GM12878 (cell line): ENCODE measurements at regions of chr5 and their contacts with region 1.

Region 1: DNA sequence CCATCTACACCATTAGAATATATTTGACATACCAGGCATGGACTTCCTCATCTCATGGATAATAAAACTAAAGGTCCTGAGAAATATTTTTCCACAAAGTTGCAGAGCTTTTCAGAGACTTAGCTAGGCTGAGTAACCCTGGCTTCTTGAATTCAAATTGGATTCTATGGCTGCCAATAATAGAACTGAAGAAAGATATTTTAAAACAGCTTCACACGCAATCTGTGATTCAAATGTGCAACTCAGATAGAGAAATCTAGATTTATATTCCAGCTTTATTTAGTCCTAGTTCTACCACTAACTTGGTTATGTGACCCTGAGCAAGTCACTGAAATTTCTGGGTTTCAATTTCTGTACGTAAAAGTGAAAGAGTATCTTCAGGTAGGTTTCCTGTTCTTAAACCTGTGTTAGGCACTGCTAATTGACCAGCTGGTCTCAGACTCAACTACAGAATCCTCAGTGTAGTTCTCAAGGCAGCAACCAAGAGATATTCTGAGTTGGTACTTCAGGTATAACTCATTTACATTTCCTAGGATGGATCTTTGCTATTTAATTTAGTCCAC is 235.3 kb downstream of the GABRB2 start:
- DNase-seq: peak; percentile 78
- ATAC-seq: peak; percentile 93
- H3K4me3 ChIP-seq: no peak overlapping the region
- H3K27ac ChIP-seq: peak overlapping the region; percentile 69
- H3K4me1 ChIP-seq: peaks cover 35% of the 10 kb centered on the region
- H3K27me3 ChIP-seq: no peaks in the 10 kb centered on the region
- CTCF ChIP-seq: no peak
- EP300 ChIP-seq: peak; percentile 13 to 66; a peak in 2 of 4 replicates
- POLR2A ChIP-seq: no peak
- RAD21 ChIP-seq: no peak

Region 2: DNA sequence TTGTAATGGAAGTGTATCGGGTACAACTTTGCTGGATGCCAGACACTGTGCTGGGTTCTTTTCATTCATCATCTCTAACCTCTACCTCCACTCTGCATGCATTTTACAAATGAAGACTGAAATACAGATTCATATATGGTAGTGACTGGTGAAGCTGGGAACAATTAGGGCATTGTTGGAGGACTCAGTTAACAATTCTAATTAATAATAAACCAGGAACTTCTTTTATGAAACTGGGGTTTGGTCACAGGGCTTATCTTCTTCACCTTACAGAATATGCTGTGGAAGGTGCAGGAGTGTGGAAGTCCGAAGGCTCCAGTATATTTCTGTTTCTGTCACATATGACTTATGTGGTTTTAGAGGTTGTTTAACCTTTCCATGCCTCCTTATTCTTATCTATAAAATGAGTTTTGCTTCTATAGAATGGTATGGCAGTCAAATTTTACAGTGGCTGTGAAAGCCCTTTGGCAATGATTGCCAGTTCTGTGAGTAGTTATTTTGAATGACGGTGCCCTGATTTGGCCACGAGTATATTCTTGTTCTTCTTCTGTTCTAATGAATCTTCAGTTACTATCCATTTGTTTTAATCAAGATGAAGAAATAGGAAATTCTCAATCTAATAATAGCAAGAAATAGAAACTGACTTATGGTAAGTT is 49.4 kb before region 1 on chr5:
- CTCF ChIA-PET with region 1: no interaction called
- POLR2A ChIA-PET with region 1: no interaction called
- RAD21 ChIA-PET with region 1: no interaction called
- SMC1A ChIA-PET with region 1: no interaction called
- in situ Hi-C with region 1: no loop called
- intact Hi-C with region 1: loop called (anchors 5 kb)
- DNase-seq: no peak
- ATAC-seq: peak; percentile 48
- H3K4me3 ChIP-seq: no peak overlapping the region
- H3K27ac ChIP-seq: no peak overlapping the region
- H3K4me1 ChIP-seq: no peaks in the 10 kb centered on the region
- H3K27me3 ChIP-seq: no peaks in the 10 kb centered on the region
- CTCF ChIP-seq: no peak
- EP300 ChIP-seq: no peak
- POLR2A ChIP-seq: no peak
- RAD21 ChIP-seq: no peak

Region 3: DNA sequence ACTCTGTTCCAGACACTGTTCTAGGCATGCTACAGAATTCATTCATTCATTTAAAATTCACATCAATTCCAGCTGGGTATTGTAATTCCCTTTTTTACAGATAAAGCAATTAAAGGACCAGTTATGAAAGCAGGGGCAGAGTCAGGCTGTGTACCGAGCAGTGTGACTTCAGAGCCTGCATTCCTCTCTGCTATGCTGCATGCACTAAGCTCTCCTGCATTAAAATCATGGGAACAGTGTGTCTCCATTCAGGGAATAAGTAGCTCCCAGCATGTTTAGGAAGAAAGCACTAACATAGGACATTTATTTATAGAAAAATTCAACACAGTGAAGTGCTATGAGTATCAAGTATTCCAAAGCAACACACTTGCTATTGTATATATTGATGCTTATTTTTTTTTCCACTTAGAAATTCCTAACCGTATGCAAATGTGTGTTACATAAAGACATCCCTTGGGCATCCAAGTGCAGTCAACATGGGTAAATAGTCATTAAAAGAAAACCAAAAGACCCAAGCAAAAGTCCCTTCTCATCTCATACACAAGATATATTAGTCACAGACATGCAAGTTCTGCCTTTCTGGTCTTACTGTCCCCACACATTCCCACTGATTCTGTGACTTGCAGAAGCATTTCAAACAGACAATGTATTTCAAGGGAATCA is 61.6 kb after region 1 on chr5:
- CTCF ChIA-PET with region 1: no interaction called
- POLR2A ChIA-PET with region 1: no interaction called
- RAD21 ChIA-PET with region 1: no interaction called
- SMC1A ChIA-PET with region 1: no interaction called
- in situ Hi-C with region 1: no loop called
- intact Hi-C with region 1: loop called (anchors 2 kb)
- DNase-seq: peak; percentile 42
- ATAC-seq: peak; percentile 79
- H3K4me3 ChIP-seq: no peak overlapping the region
- H3K27ac ChIP-seq: peak overlapping the region; percentile 34; the same call in 1 of the 2 replicates
- H3K4me1 ChIP-seq: no peaks in the 10 kb centered on the region
- H3K27me3 ChIP-seq: no peaks in the 10 kb centered on the region
- CTCF ChIP-seq: no peak
- EP300 ChIP-seq: peak in 1 of 2 experiments; percentile 48; a peak in 1 of 4 replicates
- POLR2A ChIP-seq: no peak
- RAD21 ChIP-seq: peak; percentile 11; the same call in 1 of the 2 replicates

Region 4: GRCh38 chr5:162209005-162209605 is 897.9 kb after region 1 on chr5:
- CTCF ChIA-PET with region 1: no interaction called
- POLR2A ChIA-PET with region 1: no interaction called
- RAD21 ChIA-PET with region 1: no interaction called
- SMC1A ChIA-PET with region 1: no interaction called
- in situ Hi-C with region 1: no loop called
- intact Hi-C with region 1: no loop called
- DNase-seq: peak; percentile 24
- ATAC-seq: peak; percentile 100
- H3K4me3 ChIP-seq: no peak overlapping the region
- H3K27ac ChIP-seq: no peak overlapping the region
- H3K4me1 ChIP-seq: no peaks in the 10 kb centered on the region
- H3K27me3 ChIP-seq: no peaks in the 10 kb centered on the region
- CTCF ChIP-seq: peak; percentile 42 to 69 (median 58); a peak in 5 of 6 replicates
- EP300 ChIP-seq: no peak
- POLR2A ChIP-seq: no peak
- RAD21 ChIP-seq: peak; percentile 58